Activated naive CD4-positive, alpha-beta T cell treated with anti-CD3 and anti-CD28 coated beads for 36 hours (primary cell): ENCODE measurements at regions of chr17 and their contacts with region 1.

Region 1: DNA sequence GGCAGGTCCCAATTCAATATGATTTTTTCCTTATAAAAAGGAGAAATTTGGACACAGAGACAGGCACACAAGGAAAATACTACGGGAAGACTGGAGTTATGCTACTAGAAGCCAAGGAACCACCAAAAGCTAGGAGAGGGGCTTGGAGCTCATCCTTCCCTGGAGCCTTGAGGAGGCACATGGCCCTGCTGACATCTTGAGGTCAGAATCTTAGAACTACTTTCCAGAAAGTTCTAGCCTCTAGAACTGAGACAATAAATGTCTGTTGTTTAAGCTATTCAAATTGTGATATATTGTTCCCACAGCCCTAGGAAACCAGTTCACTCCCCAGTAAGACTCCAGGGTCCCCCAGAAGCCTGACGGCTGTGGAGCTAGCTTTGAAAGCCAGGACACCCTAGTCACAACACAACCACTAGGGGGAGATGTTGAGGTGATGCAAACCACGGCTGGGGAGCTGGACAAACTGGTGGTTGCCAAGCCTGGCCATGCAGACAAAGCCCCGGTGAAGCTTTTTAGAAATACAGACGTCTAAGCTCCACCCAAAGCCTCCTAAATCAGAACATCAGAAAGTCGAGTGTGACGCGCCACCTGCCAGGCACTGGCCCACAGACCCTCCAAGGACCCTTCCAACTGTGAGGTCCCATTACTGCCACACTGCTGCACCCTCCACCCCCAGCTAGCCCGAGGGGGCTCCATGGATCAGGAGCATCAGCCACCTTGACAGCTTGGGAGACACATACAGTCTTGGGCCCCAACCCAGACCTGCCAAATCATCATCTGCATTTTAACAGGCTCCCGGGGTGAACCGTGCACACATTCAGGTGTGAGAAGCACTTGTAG is 106.4 kb downstream of the SLC39A11 start:
- DNase-seq: peak; percentile 70
- H3K4me3 Mint-ChIP-seq: no peak overlapping the region
- H3K27ac Mint-ChIP-seq: no peak overlapping the region
- H3K4me1 Mint-ChIP-seq: no peaks in the 10 kb centered on the region
- H3K27me3 Mint-ChIP-seq: no peaks in the 10 kb centered on the region

Region 2: DNA sequence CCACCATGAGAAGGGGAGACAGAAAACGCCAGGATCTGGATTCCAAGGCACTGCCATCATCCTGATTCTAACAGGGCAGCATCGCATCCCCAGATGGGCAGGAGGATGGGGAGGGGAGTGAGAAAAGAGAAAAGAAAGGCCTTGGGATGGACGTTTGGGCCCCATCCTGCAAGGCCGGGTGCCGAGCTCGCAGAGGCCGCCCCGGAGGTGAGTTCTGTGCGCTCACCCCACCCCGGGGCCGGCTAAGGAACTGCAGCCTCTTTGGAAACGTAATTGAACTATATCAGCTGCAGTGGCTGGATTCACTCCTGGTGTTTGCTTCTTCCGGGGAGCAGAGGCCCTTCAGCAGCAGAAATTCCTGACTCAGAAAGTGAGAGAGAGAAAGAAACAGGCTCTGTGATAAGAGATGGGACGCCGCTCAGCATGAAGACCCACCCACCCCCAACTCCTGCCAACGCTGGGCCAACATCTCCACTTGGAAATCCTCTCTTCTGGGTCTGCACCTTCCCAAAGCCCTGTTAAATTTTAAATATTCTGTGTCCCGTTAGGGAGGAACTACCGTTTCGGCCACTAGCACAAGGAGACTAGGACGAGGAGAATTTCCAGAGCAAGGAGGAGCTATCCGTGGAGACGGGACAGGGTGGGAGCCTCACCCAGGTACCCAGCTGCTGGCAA is 170.2 kb after region 1 on chr17:
- CTCF ChIA-PET with region 1: interaction called, 31 read pairs
- intact Hi-C with region 1: loop called (anchors 1 kb)
- DNase-seq: peak; percentile 68
- H3K4me3 Mint-ChIP-seq: no peak overlapping the region
- H3K27ac Mint-ChIP-seq: no peak overlapping the region
- H3K4me1 Mint-ChIP-seq: peaks cover 10% of the 10 kb centered on the region
- H3K27me3 Mint-ChIP-seq: peaks cover 11% of the 10 kb centered on the region